Activated CD4-positive, alpha-beta memory T cell treated with anti-CD3 and anti-CD28 coated beads for 36 hours (primary cell): ENCODE measurements at regions of chr2 and their contacts with region 1.

Region 1: GRCh38 chr2:179751163-179751809 is 110.1 kb downstream of the ZNF385B start:
- DNase-seq: no peak
- H3K4me3 Mint-ChIP-seq: no peak overlapping the region
- H3K27ac Mint-ChIP-seq: no peak overlapping the region
- H3K4me1 Mint-ChIP-seq: no peaks in the 10 kb centered on the region
- H3K27me3 Mint-ChIP-seq: no peaks in the 10 kb centered on the region

Region 2: DNA sequence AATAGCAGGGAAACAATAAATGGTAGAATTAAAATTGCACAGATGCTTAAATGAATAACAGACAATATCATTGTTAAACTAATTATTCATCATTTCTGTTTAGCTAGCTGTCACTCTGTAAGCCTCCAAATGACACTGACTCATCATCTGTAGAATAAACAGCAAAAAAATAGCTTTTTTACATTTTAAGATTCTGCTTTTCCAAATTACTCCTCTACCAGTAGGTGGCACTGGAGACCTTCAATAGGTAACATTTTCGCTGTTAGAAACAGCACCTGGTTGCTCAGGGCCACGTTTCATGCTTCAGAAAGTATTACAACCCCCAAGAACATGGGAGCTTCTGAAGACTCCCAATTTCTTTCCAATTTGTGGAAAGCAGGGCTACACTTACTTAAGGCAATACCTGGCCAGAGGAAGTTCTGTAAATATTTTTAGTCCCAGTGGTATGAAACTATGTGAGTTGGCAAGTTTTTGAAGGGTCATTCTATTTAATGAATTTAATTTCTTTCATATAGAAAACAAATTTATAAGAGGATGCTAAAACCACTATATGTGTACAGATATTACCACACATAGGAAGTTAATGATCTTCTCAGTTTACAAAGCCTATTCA is 989.4 kb before region 1 on chr2:
- CTCF ChIA-PET with region 1: no interaction called
- POLR2A ChIA-PET with region 1: no interaction called
- intact Hi-C with region 1: loop called (anchors 2 kb)
- DNase-seq: peak; percentile 9
- H3K4me3 Mint-ChIP-seq: no peak overlapping the region
- H3K27ac Mint-ChIP-seq: no peak overlapping the region
- H3K4me1 Mint-ChIP-seq: no peaks in the 10 kb centered on the region
- H3K27me3 Mint-ChIP-seq: no peaks in the 10 kb centered on the region

Region 3: GRCh38 chr2:179218848-179219594 is 532.3 kb before region 1 on chr2:
- CTCF ChIA-PET with region 1: no interaction called
- POLR2A ChIA-PET with region 1: no interaction called
- intact Hi-C with region 1: loop called (anchors 1 kb)
- DNase-seq: peak; percentile 58
- H3K4me3 Mint-ChIP-seq: no peak overlapping the region
- H3K27ac Mint-ChIP-seq: no peak overlapping the region
- H3K4me1 Mint-ChIP-seq: no peaks in the 10 kb centered on the region
- H3K27me3 Mint-ChIP-seq: no peaks in the 10 kb centered on the region

Region 4: GRCh38 chr2:179410552-179411356 is 340.5 kb before region 1 on chr2:
- CTCF ChIA-PET with region 1: no interaction called
- POLR2A ChIA-PET with region 1: no interaction called
- intact Hi-C with region 1: loop called (anchors 2 kb)
- DNase-seq: peak; percentile 16
- H3K4me3 Mint-ChIP-seq: no peak overlapping the region
- H3K27ac Mint-ChIP-seq: no peak overlapping the region
- H3K4me1 Mint-ChIP-seq: peaks cover 5% of the 10 kb centered on the region
- H3K27me3 Mint-ChIP-seq: peaks cover 8% of the 10 kb centered on the region

Region 5: DNA sequence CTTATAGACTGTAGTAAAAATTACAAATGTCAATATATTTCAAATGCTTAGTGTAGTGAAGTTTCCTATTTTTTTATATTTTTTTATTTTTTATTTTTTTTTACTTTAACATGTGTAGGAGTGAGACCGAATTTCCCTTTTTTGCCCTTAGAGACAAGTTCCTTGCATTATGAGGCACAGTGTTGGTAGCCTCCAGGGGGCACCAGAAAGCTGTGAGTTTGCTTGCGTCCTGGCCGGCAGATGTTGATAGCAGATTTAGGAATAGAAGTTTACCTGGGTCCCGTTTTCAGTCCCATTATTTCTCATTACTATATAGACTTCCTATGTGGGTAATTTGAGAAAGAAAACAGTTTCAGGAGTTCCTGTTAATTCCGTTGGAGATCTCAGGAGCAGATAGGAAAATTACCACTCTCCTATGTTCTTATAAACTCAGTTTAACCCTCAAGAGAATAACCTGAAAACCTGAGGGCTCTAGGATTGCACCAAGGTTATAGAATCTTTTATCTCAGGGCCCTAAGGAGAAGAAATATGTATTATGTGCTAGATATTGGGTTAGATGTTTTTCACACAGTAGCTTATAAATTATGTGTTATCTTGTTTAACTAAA is 329.1 kb before region 1 on chr2:
- CTCF ChIA-PET with region 1: interaction called, 6 read pairs
- POLR2A ChIA-PET with region 1: no interaction called
- intact Hi-C with region 1: loop called (anchors 1 kb)
- DNase-seq: peak; percentile 66
- H3K4me3 Mint-ChIP-seq: no peak overlapping the region
- H3K27ac Mint-ChIP-seq: no peak overlapping the region
- H3K4me1 Mint-ChIP-seq: no peaks in the 10 kb centered on the region
- H3K27me3 Mint-ChIP-seq: no peaks in the 10 kb centered on the region

Region 6: DNA sequence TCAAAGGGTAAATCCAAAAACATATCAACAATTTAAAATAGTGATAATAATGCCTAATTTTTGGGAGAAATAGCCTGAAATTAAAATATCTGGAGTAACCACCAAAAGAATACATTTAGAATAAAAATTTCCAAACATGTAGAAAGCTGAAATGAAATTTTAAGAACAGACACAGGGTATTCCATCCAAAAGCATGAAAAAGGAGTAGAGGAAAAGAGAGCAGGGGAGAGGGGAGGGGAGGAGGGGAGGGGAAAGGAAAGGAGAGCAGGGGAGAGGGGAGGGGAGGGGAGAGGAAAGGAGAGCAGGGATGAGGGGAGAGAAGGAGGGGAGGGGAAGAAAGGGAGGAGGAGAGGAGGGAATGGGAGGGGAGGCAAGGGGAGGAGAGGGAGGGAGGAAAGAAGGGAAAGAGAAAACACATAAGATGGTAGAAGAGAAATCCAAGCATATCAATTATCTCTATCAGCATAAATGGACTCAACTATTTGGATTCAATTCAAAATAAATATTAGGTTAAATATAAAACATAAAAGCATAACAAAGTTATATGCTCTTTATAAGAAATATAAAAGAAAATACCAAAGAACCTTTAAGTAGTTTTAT is 31.0 kb before region 1 on chr2:
- CTCF ChIA-PET with region 1: no interaction called
- POLR2A ChIA-PET with region 1: no interaction called
- intact Hi-C with region 1: no loop called
- DNase-seq: no peak
- H3K4me3 Mint-ChIP-seq: no peak overlapping the region
- H3K27ac Mint-ChIP-seq: no peak overlapping the region
- H3K4me1 Mint-ChIP-seq: no peaks in the 10 kb centered on the region
- H3K27me3 Mint-ChIP-seq: no peaks in the 10 kb centered on the region

Region 7: GRCh38 chr2:179825494-179825893 is 74.2 kb after region 1 on chr2:
- CTCF ChIA-PET with region 1: no interaction called
- POLR2A ChIA-PET with region 1: no interaction called
- intact Hi-C with region 1: no loop called
- DNase-seq: no peak
- H3K4me3 Mint-ChIP-seq: no peak overlapping the region
- H3K27ac Mint-ChIP-seq: no peak overlapping the region
- H3K4me1 Mint-ChIP-seq: no peaks in the 10 kb centered on the region
- H3K27me3 Mint-ChIP-seq: peaks cover 8% of the 10 kb centered on the region

Region 8: GRCh38 chr2:179861416-179862067 is 110.3 kb after region 1 on chr2 and contains the start of gene ZNF385B:
- CTCF ChIA-PET with region 1: no interaction called
- POLR2A ChIA-PET with region 1: no interaction called
- intact Hi-C with region 1: no loop called
- DNase-seq: no peak
- H3K4me3 Mint-ChIP-seq: peak within 1 kb of the TSS; percentile 17
- H3K27ac Mint-ChIP-seq: no peak within 1 kb of the TSS
- H3K4me1 Mint-ChIP-seq: peaks cover 14% of the 10 kb centered on the region
- H3K27me3 Mint-ChIP-seq: peaks cover 46% of the 10 kb centered on the region
- total RNA-seq, gene ZNF385B: not detected